AG04450 (cell line): ENCODE measurements at regions of chr14 and their contacts with region 1.

Region 1: GRCh38 chr14:24195191-24196070 is at the start of gene TM9SF1:
- DNase-seq: peak; percentile 64
- H3K4me3 ChIP-seq: peak within 1 kb of the TSS; percentile 87
- H3K27ac ChIP-seq: peak within 1 kb of the TSS; percentile 94
- H3K27me3 ChIP-seq: no peaks in the 10 kb centered on the region
- CTCF ChIP-seq: no peak
- polyA plus RNA-seq, gene TM9SF1: 41.7 and 44.9 TPM in 2 replicates

Region 2: GRCh38 chr14:24095271-24096068 is 100.0 kb before region 1 on chr14:
- CTCF ChIA-PET with region 1: no interaction called
- POLR2A ChIA-PET with region 1: no interaction called
- DNase-seq: no peak
- H3K4me3 ChIP-seq: peak overlapping the region; percentile 83
- H3K27ac ChIP-seq: peak overlapping the region; percentile 68
- H3K27me3 ChIP-seq: no peaks in the 10 kb centered on the region
- CTCF ChIP-seq: no peak

Region 3: DNA sequence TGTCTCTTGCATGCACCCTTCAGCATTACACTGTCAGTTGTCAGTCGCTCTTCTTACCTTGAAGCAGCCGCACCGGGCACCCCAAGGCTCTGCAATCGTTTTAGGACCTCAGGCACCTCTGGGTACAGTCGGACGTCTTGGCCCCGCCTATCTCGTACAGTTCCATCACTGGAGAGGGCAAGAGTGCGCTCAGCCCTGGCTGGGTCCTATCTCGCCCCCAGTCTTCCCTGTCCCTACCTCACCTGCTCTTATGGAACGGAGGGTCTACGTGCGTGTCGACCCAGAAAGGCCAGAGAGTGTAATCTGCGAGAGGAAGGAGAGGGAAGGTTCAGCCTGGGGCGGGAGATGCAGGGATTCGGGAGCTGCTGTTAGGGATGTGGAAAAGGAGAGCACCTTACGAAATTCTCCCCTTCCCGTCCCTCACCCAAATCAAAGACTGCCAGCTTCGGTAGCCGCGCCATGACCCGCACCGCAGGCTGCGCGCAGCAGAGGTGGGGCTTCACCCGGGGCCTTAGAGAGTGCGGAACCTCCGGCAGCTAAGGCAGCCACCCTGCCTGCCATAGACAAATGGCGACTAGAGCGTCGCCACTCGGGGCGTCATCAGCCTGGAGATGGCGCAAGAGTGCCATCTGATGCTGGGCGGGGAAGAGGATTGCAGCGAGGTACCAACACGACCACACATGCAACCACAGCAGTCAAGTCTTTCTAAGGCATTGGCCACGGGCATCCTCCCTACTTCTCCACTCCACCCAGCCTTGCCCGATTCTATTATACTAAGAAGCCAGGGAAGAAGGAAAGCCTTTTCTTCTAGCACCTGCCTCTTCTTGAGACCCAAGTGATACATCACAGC is 20.3 kb after region 1 on chr14 and contains the start of gene MDP1:
- CTCF ChIA-PET with region 1: no interaction called
- POLR2A ChIA-PET with region 1: interaction called, 12 read pairs
- DNase-seq: peak; percentile 43
- H3K4me3 ChIP-seq: peak within 1 kb of the TSS; percentile 79
- H3K27ac ChIP-seq: peak within 1 kb of the TSS; percentile 84
- H3K27me3 ChIP-seq: no peaks in the 10 kb centered on the region
- CTCF ChIP-seq: peak; percentile 41
- polyA plus RNA-seq, gene MDP1: 14.9 and 16.1 TPM in 2 replicates